ENCODE measurements at regions of chr12 and their contacts with region 1.

Region 1: DNA sequence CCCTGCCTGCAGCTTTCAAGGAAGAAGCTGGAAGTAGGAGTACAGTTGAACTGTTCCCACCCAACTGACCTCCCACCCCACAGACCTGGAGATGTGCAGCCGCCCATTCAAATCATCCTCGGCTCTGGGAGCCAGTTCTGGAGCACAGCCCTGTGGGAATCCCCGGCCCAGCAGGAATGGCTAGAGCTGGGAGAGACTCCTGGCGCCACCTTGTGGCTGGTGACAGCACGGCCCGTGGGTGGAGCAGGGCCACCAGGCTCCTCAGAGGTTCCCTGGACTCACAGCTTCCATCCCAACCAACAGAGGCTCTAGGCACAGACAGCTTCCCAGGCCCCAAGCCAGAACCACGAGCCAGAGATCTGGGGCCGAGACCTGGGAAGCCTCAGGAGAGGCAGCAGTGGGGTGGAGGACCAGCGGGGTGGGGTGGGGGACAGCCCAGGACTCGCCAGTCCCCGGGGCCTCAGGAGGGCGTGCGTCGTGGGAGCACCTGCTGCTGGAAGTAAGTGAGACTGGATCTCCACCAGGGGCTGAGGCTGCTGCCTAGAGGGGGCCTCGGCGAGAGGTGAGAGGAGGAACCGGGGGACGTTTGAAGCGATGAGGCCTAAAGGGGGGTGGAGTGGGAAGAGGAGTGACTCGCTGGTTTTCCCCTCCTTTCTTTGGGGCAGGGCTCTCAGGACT is 43.4 kb downstream of the RNF34 start:
- DNase-seq: peak; percentile 57
- ATAC-seq: peak; percentile 80
- H3K4me3 Mint-ChIP-seq: no peak overlapping the region
- H3K27ac Mint-ChIP-seq: peak overlapping the region; percentile 24
- H3K4me1 Mint-ChIP-seq: peaks cover 5% of the 10 kb centered on the region
- H3K27me3 Mint-ChIP-seq: no peaks in the 10 kb centered on the region
- CTCF ChIP-seq: peak; percentile 51

Region 2: GRCh38 chr12:121060149-121061001 is 383.0 kb before region 1 on chr12:
- CTCF ChIA-PET with region 1: no interaction called
- POLR2A ChIA-PET with region 1: no interaction called
- intact Hi-C with region 1: loop called (anchors 5 kb)
- DNase-seq: peak; percentile 26
- ATAC-seq: peak; percentile 94
- H3K4me3 Mint-ChIP-seq: peak overlapping the region; percentile 83
- H3K27ac Mint-ChIP-seq: peak overlapping the region; percentile 82
- H3K4me1 Mint-ChIP-seq: peaks cover 11% of the 10 kb centered on the region
- H3K27me3 Mint-ChIP-seq: no peaks in the 10 kb centered on the region
- CTCF ChIP-seq: peak; percentile 44

Region 3: GRCh38 chr12:121334513-121335343 is 108.6 kb before region 1 on chr12:
- CTCF ChIA-PET with region 1: interaction called, 48 read pairs
- POLR2A ChIA-PET with region 1: no interaction called
- intact Hi-C with region 1: loop called (anchors 1 kb)
- DNase-seq: no peak
- ATAC-seq: peak; percentile 69
- H3K4me3 Mint-ChIP-seq: no peak overlapping the region
- H3K27ac Mint-ChIP-seq: no peak overlapping the region
- H3K4me1 Mint-ChIP-seq: peaks cover 2% of the 10 kb centered on the region
- H3K27me3 Mint-ChIP-seq: no peaks in the 10 kb centered on the region
- CTCF ChIP-seq: peak; percentile 82

Region 4: DNA sequence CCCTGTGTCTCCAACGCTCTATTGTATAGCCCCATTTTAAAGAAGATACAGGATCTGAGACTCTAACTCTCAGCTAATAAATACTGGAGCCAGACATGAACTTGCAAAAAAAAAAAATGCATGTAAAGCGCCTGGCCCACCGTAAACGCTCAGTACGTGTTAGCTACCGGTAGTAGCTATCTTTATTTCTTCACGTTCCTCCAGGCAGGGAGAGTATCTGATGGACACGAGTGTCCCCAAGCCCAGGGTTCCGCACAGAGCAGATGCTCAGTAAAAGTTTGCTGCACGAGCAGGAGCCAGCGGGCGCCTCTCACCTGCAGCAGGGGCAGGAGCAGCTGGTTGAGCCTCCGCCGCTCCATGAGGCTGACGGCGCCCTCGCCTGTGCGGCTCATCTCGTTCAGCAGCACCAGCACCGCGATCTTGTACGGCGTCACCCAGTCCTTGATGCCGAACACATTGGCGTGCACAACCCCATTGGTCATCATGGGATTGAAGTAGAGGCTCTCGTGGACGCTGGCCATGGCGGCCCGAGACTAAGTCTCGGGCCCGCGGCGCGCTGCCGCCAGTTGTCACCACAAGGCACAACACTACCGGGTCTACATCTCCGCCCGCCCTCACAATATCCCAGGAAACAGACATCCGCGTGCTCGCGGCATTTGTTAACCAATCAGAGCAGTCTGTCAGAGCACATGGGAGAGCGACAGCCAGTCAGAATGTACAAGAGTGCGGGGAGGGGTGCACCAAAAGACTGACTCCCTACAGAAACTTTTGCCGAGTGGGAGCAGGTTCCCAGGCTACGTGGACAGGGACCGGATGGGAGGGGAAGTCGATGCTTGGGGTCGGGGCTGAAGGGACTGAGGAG is 91.3 kb before region 1 on chr12 and contains the start of gene ANAPC5:
- CTCF ChIA-PET with region 1: interaction called, 7 read pairs
- POLR2A ChIA-PET with region 1: interaction called, 3 read pairs
- intact Hi-C with region 1: loop called (anchors 5 kb)
- DNase-seq: peak; percentile 73
- ATAC-seq: peak; percentile 99
- H3K4me3 Mint-ChIP-seq: peak within 1 kb of the TSS; percentile 94
- H3K27ac Mint-ChIP-seq: peak within 1 kb of the TSS; percentile 91
- H3K4me1 Mint-ChIP-seq: peaks cover 28% of the 10 kb centered on the region
- H3K27me3 Mint-ChIP-seq: no peaks in the 10 kb centered on the region
- CTCF ChIP-seq: no peak
- total RNA-seq, gene ANAPC5: 116 and 143 TPM in 2 replicates

Region 5: GRCh38 chr12:121461048-121461447 is 17.7 kb after region 1 on chr12:
- CTCF ChIA-PET with region 1: interaction called, 13 read pairs
- POLR2A ChIA-PET with region 1: interaction called, 4 read pairs
- intact Hi-C with region 1: no loop called
- DNase-seq: no peak
- ATAC-seq: no peak
- H3K4me3 Mint-ChIP-seq: no peak overlapping the region
- H3K27ac Mint-ChIP-seq: no peak overlapping the region
- H3K4me1 Mint-ChIP-seq: peaks cover 60% of the 10 kb centered on the region
- H3K27me3 Mint-ChIP-seq: no peaks in the 10 kb centered on the region
- CTCF ChIP-seq: no peak

Region 6: GRCh38 chr12:121494093-121494787 is 50.9 kb after region 1 on chr12:
- CTCF ChIA-PET with region 1: no interaction called
- POLR2A ChIA-PET with region 1: interaction called, 12 read pairs
- intact Hi-C with region 1: no loop called
- DNase-seq: peak; percentile 37
- ATAC-seq: no peak
- H3K4me3 Mint-ChIP-seq: no peak overlapping the region
- H3K27ac Mint-ChIP-seq: no peak overlapping the region
- H3K4me1 Mint-ChIP-seq: peaks cover 40% of the 10 kb centered on the region
- H3K27me3 Mint-ChIP-seq: no peaks in the 10 kb centered on the region
- CTCF ChIP-seq: no peak

Measured in activated B cell treated with CpG ODN at 0.5 μM for 24 hours (primary cell).